Dorsolateral prefrontal cortex (tissue), 120 donors: ENCODE measurements at regions of chr10 and their contacts with region 1.

Region 1: GRCh38 chr10:116287906-116288501 is 15.0 kb upstream of the GFRA1 start:
- DNase-seq: peak in 3 of 10 donors; percentile 43 to 51 (median 48)
- H3K4me3 ChIP-seq: no peak overlapping the region
- H3K27ac ChIP-seq: no peak overlapping the region
- H3K27me3 ChIP-seq: peaks cover 0 to 42% (median 0%) of the 10 kb centered on the region in 45 donors
- CTCF ChIP-seq: peak; percentile 68 to 96 (median 83)

Region 2: GRCh38 chr10:115171392-115171960 is 1116.5 kb before region 1 on chr10:
- intact Hi-C with region 1: loop called in 1 of 2 experiments (anchors 10 kb)
- DNase-seq: no peak
- H3K4me3 ChIP-seq: no peak overlapping the region
- H3K27ac ChIP-seq: no peak overlapping the region
- H3K27me3 ChIP-seq: no peaks in the 10 kb centered on the region
- CTCF ChIP-seq: peak in 54 of 56 donors; percentile 32 to 76 (median 61)

Region 3: DNA sequence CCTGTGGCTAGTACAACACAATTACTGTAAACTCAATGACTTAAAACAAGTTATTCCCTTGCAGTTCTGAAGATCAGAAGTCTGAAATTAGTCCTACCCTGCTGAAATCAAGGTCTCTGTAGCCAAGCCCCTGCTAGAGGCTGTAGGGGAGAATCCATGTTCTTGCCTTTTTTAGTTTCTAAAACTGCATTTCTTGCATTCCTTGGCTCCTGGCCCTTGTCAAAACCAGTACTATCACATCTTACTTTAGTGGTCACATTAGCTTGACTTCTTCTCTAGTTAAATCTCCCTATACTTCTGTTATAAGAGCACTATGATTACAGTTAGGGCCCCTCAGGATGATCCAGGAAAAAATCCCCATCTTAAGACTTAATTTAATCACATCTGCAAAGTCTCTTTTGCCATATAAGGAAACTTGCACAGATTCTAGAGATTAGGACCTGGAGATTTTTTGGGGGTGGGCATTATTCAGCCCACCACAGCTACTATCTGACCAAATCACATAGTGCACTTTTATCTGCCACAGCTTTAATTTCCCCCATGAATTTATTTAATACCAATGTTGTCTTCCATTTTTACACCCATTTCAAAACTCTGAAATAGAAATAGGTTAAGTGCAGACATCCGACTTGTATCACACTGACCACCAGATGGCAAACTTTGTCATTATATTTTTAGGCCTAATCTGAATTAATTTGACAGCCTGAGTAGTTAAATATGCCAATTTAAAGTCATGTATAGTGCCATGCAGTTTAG is 581.8 kb before region 1 on chr10:
- intact Hi-C with region 1: loop called (anchors 5 kb)
- DNase-seq: no peak
- H3K4me3 ChIP-seq: no peak overlapping the region
- H3K27ac ChIP-seq: no peak overlapping the region
- H3K27me3 ChIP-seq: no peaks in the 10 kb centered on the region
- CTCF ChIP-seq: peak in 55 of 56 donors; percentile 32 to 76 (median 61)

Region 4: DNA sequence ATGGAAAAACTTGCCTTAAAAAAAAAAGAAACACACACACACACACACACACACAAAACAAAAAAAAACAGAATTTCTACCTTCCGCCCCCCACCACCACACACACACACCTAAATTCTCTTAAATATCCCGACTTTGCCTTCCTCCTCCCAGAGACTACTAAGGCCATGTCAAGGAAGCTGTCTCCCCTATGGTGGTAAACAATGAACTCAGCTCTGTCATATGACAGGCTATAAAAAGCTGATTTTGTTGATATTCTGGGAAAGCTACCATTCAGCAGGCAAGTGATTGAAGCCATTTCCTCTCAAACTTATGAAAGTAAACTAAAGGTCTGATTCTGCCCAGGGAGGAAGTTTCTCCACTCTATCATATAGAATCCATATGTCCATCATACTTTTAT is 486.0 kb before region 1 on chr10:
- intact Hi-C with region 1: loop called in 1 of 2 experiments (anchors 10 kb)
- DNase-seq: no peak
- H3K4me3 ChIP-seq: no peak overlapping the region
- H3K27ac ChIP-seq: no peak overlapping the region
- H3K27me3 ChIP-seq: no peaks in the 10 kb centered on the region
- CTCF ChIP-seq: no peak

Region 5: DNA sequence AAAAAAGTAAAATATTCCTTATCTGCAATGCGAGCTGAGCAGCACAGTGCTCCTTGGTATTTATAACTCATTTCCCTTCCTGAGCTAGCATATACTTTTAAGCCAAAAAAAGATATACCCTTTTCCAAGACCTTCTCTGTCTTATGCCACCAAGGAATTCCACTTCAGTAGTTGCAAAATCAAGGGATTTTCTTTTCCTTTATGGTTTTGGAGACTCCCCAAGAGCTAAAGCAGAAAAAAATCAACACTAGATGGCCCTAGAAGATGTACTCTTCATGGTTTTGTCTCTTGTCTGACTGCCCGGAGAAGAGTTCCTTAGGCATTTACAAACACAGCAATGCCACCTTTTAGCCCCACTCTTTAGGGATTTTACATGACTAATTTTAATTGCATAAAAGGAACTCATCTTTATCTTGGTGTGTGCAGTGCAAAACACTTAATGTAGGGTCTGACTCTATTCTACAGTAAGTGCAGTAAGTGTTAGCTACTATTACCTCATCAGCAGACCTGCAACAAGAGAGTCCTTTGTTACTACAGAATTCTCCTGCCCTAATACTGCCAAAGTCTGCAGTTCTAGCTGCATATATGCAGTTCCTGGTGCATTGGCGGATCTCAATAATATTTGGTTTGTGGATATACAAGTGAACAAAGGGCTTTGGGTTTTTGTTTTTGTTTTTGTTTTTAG is 458.3 kb before region 1 on chr10:
- intact Hi-C with region 1: loop called in 1 of 2 experiments (anchors 5 kb)
- DNase-seq: no peak
- H3K4me3 ChIP-seq: no peak overlapping the region
- H3K27ac ChIP-seq: no peak overlapping the region
- H3K27me3 ChIP-seq: no peaks in the 10 kb centered on the region
- CTCF ChIP-seq: peak in 28 of 56 donors; percentile 8 to 48 (median 28)

Region 6: DNA sequence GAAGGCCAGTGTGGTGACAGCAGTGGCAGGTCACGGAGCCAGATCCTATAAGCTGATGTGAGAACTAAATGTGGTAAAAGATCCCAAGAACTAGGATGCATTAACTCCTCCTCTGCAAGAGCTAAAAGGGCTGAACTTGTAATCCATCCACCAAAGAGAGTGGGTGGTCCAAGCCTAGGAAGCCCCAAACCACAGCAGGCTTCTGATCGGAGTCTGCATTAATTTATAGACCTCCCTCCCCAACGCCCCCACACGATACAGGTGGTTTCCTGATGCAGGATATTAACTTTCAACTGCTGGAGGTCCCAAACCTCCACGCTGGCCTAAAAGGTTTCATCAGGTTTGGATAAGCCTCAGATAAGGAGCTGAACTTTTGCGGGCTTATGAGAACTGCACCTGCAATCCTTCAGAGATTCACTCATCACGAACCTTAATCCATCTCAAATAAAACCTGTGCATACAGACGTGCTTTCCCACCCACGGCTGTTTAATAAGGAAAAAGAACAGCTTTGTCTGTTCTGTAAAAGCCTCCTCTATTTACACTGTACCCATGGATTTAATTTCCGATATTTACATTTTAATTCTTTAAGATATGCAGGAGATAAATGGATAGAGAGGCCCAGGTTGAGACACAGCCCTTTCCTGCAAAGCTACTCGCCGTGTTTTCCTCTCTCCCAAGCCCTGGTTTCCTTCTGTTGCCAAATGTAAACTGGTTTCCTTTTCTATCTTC is 89.9 kb before region 1 on chr10:
- intact Hi-C with region 1: no loop called
- DNase-seq: no peak
- H3K4me3 ChIP-seq: no peak overlapping the region
- H3K27ac ChIP-seq: no peak overlapping the region
- H3K27me3 ChIP-seq: peaks cover 0 to 15% (median 0%) of the 10 kb centered on the region in 45 donors
- CTCF ChIP-seq: no peak